K562 (cell line): ENCODE measurements at regions of chr7 and their contacts with region 1.

Region 1: GRCh38 chr7:130912862-130913631 is 179.0 kb upstream of the KLF14 start:
- DNase-seq: peak in 3 of 4 experiments; percentile 35 to 67 (median 55)
- ATAC-seq: peak; percentile 62
- H3K4me3 ChIP-seq: peak overlapping the region; percentile 35
- H3K27ac ChIP-seq: peak overlapping the region; percentile 76
- H3K4me1 ChIP-seq: peaks cover 17 to 64% of the 10 kb centered on the region in 2 experiments
- H3K27me3 ChIP-seq: no peaks in the 10 kb centered on the region
- CTCF ChIP-seq: no peak
- EP300 ChIP-seq: no peak
- POLR2A ChIP-seq: peak; percentile 59; the same call in 1 of the 2 replicates
- RAD21 ChIP-seq: no peak

Region 2: GRCh38 chr7:130961128-130961601 is 48.1 kb after region 1 on chr7:
- CTCF ChIA-PET with region 1: no interaction called
- POLR2A ChIA-PET with region 1: interaction called, 3 read pairs
- in situ Hi-C with region 1: no loop called
- intact Hi-C with region 1: loop called (anchors 5 kb)
- DNase-seq: peak in 1 of 4 experiments; percentile 35
- ATAC-seq: peak; percentile 57
- H3K4me3 ChIP-seq: no peak overlapping the region
- H3K27ac ChIP-seq: peak overlapping the region; percentile 3; the same call in 2 of the 3 replicates
- H3K4me1 ChIP-seq: peaks cover 0 to 22% of the 10 kb centered on the region in 2 experiments; a peak in 4 of 5 replicates
- H3K27me3 ChIP-seq: no peaks in the 10 kb centered on the region
- CTCF ChIP-seq: no peak
- EP300 ChIP-seq: no peak
- POLR2A ChIP-seq: no peak
- RAD21 ChIP-seq: no peak